Left cardiac atrium (tissue), 4 donors: ENCODE measurements at regions of chr2 and their contacts with region 1.

Region 1: GRCh38 chr2:25041928-25042320 is at the start of gene EFR3B:
- DNase-seq: peak; percentile 97
- ATAC-seq: peak; percentile 99
- total RNA-seq, gene EFR3B: 7.5 to 8.7 TPM

Region 2: GRCh38 chr2:24984912-24985311 is 57.0 kb before region 1 on chr2:
- intact Hi-C with region 1: loop called in 1 of 2 experiments (anchors 5 kb)
- DNase-seq: peak; percentile 64
- ATAC-seq: peak; percentile 94 to 96

Region 3: DNA sequence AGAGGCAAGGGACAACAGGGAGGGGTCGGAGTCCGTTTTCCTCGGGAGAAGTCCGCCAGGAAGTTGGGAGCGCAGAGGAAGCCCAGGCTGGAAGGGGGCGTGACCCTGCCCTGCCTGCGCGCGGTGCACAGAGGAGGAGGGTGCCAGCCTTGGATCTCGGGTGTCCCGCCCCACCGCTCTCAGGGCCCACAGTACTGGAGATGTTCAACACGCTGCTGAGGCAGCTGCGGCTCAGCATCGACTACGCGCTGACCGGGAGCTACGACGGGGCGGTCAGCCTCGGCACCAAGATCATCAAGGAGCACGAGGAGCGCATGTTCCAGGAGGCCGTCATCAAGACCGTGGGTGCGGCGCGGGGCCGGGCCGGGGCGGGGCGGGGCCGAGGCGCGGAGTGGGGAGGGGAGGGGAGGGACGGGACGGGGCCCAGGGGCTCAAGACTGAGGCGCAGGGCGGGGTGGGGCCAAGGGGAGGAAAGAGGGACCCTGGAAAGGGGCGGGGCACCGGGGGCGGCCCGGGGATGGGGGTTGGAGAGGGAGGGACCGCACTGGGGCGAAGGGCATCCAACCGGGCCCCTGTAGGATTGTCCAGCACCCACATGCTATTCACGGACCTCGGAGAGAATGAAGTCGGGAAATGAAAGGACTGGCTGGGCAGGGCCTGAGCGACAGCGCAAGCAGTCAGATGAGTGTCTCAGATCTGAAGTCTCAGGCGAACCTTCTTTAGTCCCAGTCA is 89.8 kb after region 1 on chr2:
- intact Hi-C with region 1: loop called in 1 of 2 experiments (anchors 5 kb)
- DNase-seq: peak; percentile 40
- ATAC-seq: peak; percentile 54 to 73

Region 4: DNA sequence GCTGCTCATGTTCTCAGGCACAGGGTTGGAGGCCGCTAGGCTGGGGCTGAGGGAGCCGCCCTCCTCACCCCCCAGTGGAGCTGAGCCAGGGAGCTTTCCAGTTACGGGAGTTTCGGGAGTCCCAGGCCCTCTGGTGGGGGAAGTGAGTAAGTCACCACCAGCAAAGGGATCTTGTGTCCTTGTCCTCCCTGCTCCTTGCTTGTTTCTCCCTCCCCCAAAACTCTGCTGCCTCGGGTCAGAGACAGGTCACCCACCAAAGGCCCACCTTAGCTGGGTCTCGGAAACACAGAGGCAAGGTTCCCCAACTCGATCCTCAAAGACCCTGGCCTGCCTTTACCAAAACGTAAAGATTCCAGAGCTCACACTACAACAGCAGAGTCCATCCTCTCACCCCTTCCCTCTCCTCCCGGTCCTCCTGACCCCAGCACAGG is 186.9 kb after region 1 on chr2:
- intact Hi-C with region 1: no loop called
- DNase-seq: peak; percentile 85
- ATAC-seq: peak; percentile 84 to 87

Region 5: GRCh38 chr2:26054598-26055348 is 1012.8 kb after region 1 on chr2:
- intact Hi-C with region 1: no loop called
- DNase-seq: no peak
- ATAC-seq: no peak